GM23248 (cell line): ENCODE measurements at regions of chr6 and their contacts with region 1.

Region 1: GRCh38 chr6:32529697-32530429 is at the start of gene HLA-DRB5:
- DNase-seq: no peak
- H3K4me3 ChIP-seq: no peak within 1 kb of the TSS
- H3K27ac ChIP-seq: no peak within 1 kb of the TSS
- H3K4me1 ChIP-seq: no peaks in the 10 kb centered on the region
- H3K27me3 ChIP-seq: no peaks in the 10 kb centered on the region
- total RNA-seq, gene HLA-DRB5: not detected in 2 replicates

Region 2: GRCh38 chr6:32589598-32590449 is 60.0 kb after region 1 on chr6 and contains the start of gene HLA-DRB1:
- in situ Hi-C with region 1: loop called (anchors 10 kb)
- DNase-seq: peak; percentile 35
- H3K4me3 ChIP-seq: no peak within 1 kb of the TSS
- H3K27ac ChIP-seq: no peak within 1 kb of the TSS
- H3K4me1 ChIP-seq: no peaks in the 10 kb centered on the region
- H3K27me3 ChIP-seq: no peaks in the 10 kb centered on the region
- total RNA-seq, gene HLA-DRB1: not detected in 2 replicates